ENCODE measurements at regions of chr12 and their contacts with region 1.

Region 1: GRCh38 chr12:47054659-47055058 is 24.8 kb upstream of the PCED1B start:
- DNase-seq: peak in 2 of 3 donors; percentile 5 to 15
- H3K4me3 ChIP-seq: no peak overlapping the region
- H3K27ac ChIP-seq: no peak overlapping the region
- H3K4me1 ChIP-seq: peaks cover 0 to 9% (median 4%) of the 10 kb centered on the region in 4 experiments
- H3K27me3 ChIP-seq: no peaks in the 10 kb centered on the region

Region 2: DNA sequence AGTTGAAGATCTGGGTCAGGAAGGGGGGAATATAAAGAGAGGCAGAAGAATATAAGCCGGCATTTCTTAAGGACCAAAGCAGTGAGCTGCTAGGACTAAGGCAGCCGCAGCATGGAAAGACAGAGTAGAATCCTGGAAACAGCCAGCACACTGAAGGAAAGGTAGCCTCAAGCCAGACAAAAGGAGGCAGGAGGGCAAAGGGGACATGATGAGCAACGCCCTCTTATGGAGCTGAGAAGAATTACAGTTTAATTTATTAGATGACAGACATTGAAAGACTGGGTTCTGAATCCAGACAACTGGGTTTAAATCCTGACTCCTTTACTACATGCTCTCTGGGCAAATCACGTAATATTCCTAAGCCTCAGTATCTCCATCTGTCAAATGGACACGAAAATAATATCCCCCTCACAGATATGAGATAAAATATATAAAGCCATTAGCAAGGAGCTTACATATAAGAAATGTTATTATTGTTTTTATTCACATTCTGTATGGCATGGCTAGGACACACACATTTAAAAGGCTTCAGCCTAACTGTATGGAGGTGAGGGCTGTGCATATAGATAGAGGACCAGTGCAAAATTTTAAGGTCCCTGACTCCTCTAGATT is 16.7 kb after region 1 on chr12:
- CTCF ChIA-PET with region 1: interaction called, 20 read pairs
- POLR2A ChIA-PET with region 1: no interaction called
- DNase-seq: peak; percentile 20 to 50 (median 47)
- H3K4me3 ChIP-seq: no peak overlapping the region
- H3K27ac ChIP-seq: no peak overlapping the region
- H3K4me1 ChIP-seq: no peaks in the 10 kb centered on the region
- H3K27me3 ChIP-seq: peaks cover 0 to 1% (median 0%) of the 10 kb centered on the region in 5 experiments

Region 3: GRCh38 chr12:47281667-47282171 is 227.1 kb after region 1 on chr12:
- CTCF ChIA-PET with region 1: no interaction called
- POLR2A ChIA-PET with region 1: no interaction called
- DNase-seq: no peak
- H3K4me3 ChIP-seq: no peak overlapping the region
- H3K27ac ChIP-seq: no peak overlapping the region
- H3K4me1 ChIP-seq: peaks cover 10 to 15% (median 14%) of the 10 kb centered on the region in 4 experiments
- H3K27me3 ChIP-seq: no peaks in the 10 kb centered on the region